ENCODE measurements at regions of chr3 and their contacts with region 1.

Region 1: DNA sequence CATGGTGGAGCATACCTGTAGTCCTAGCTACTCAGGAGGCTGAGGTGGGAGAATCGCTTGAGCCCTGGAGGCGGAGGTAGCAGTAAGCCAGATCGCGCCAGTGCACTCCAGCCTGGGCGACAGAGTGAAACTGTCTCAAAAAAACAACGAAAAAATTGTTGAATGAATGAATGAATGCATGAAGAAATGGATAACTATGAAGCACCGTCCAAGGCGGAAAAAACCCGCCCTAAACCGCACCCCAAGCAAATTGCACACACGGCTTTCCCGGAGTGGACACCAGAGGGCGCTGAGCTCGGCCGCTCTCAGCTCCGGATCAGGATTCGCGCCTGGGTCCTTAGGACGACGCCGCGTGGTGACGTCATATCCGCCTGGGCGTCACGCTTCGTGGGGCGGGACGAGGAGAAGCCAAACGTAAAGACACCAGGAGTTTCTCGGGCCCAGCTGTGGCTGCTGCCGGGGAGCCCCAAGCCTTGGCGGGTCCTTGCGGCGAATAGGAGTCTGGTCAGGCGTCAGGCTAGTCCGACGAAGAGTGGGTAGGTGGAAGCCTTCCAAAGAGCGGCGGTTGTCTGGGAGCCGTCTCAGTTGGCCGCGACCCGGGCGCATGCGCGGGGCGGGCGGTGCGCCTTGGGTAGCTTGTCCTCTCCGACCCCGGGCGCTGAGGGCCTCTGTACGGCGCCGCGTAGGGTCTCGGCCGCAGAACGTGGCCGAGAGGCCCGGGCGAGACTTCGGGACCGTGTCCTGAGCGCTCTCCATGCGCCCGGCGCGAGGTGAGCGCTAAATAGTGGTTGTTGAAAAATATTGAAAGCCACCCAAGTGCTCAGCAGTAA is at the starts of genes HTD2 and RPP14:
- DNase-seq: peak; percentile 76
- H3K4me3 ChIP-seq: peak within 1 kb of the TSS; percentile 84
- CTCF ChIP-seq: peak; percentile 98

Region 2: GRCh38 chr3:57883071-57883470 is 423.0 kb before region 1 on chr3:
- CTCF ChIA-PET with region 1: no interaction called
- POLR2A ChIA-PET with region 1: no interaction called
- DNase-seq: no peak
- H3K4me3 ChIP-seq: no peak overlapping the region
- CTCF ChIP-seq: no peak

Region 3: DNA sequence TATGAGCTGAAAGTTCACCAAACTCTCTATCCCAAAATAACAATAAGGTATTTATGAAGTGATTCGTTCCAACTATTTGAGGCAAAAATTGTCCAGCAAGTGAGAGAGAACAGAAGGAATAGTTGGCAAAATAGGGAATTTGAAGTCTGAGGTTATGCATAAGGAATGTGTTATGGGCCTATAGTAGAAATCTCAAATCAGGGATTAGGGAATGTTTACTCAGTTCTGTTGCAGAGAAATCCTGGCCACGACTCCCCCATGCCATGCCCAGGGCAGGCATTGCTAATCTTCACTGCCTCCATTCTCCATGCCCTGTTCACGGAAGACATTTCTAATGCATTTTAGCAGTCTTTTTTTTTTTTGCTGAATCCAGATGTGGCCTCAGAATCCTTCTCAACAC is 239.3 kb before region 1 on chr3:
- CTCF ChIA-PET with region 1: no interaction called
- POLR2A ChIA-PET with region 1: no interaction called
- DNase-seq: no peak
- H3K4me3 ChIP-seq: no peak overlapping the region
- CTCF ChIP-seq: no peak

Region 4: DNA sequence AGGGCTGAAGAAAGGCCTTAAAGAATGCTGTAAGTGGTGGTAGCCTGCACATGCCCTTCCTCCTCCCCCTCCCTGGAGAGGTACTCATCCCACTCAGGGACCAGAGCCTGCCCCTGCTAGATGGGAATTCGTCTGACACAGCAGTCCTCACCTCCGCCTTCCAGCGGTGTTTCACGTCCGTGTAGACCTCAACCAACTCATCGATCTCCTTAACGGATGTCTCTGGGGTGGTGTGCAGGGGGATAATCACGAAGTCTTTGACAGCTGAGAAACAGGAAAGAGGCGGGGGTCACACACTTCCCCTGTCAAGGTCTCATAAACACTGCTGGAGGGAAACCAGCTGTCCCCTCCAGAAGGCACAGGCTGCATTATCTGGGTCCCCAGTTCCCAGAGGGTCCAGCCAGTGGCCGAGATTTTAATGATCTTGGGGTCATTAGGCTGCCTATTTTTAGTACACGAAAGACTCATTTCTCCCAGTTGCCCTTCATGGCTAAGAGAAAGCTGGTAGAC is 105.2 kb before region 1 on chr3:
- CTCF ChIA-PET with region 1: interaction called, 25 read pairs
- POLR2A ChIA-PET with region 1: no interaction called
- DNase-seq: no peak
- H3K4me3 ChIP-seq: no peak overlapping the region
- CTCF ChIP-seq: no peak

Region 5: DNA sequence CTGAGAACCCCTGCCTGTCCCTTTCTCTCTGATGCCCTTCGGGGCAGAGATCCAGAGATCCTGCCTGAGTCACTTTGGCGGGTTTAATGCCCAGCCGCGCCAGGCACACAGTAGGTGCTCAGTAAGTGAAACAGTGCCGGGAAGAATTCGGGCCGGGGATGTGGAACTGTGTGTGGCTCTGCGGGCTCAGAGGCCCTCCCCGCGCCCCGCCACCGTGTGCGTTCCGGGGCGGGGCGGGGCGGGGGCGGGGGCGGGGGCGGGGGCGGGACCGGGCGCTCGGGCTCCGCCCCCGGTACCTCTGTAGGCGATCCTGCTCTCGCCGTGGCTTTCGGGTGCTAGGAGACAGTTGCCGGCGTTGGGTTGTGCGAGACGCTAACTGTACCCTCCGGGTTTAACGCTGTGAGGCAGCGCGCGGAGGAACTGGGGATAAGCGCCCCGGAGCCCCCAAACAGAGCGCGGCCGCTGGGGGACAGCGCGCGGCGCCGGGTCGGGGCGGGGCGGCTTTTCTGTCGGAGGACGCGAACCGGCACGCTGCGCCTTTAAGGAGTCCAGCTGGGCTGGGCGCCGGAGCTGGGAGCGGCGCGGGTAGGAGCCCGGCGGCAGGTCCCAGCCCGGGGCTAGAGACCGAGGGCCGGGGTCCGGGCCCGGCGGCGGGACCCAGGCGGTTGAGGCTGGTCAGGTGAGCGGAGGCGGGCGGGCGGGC is 68.7 kb before region 1 on chr3 and contains the start of gene ABHD6:
- CTCF ChIA-PET with region 1: interaction called, 35 read pairs
- POLR2A ChIA-PET with region 1: no interaction called
- DNase-seq: no peak
- H3K4me3 ChIP-seq: peak within 1 kb of the TSS; percentile 81
- CTCF ChIP-seq: peak; percentile 33

Region 6: DNA sequence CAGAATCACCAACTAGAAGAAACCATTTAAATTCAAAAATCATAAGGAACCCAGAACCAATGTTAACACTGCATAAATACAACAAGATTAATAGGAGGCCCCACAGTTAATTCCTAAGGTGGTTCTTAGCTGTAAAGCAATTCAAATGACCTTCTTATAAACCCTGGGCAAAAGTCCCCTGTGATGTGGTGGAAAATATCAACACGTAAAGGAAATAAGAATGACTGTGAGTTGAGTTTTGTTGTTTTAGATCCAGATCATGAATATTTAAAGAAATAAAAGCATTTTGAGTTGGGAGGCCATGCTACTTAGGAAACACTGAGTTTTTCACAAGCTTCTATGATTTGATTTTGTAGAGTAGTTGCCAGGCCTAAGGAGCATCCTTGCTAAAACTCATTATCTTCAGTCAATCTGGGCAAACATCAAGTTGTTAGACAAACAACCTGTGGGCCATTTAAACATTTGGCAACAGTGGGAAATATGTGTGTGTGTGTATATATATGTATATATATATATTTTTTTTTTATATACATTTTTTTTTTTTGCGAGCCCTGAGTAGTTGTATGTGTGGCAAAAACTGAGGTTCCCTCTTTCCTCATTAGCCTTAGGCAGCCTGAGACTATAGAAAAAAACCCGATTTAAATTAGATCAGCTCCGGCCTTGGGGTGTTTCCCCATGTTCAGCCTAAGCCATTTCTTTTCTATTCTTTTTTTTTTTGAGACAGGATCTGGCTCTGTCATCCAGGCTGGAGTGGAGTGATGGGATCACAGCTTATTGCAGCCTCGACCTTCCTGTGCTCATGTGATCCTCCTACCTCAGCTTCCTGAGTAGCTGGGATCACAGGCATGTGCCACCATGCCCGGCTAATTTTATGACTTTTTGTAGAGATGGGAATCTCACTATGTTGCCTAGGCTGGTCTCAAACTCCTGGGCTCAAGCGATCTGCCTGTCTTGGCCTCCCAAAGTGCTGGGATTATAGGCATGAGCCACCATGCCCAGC is 18.6 kb after region 1 on chr3:
- CTCF ChIA-PET with region 1: interaction called, 156 read pairs
- POLR2A ChIA-PET with region 1: no interaction called
- DNase-seq: no peak
- H3K4me3 ChIP-seq: no peak overlapping the region
- CTCF ChIP-seq: no peak

Region 7: GRCh38 chr3:58414538-58415197 is 108.6 kb after region 1 on chr3:
- CTCF ChIA-PET with region 1: interaction called, 87 read pairs
- POLR2A ChIA-PET with region 1: no interaction called
- DNase-seq: no peak
- H3K4me3 ChIP-seq: no peak overlapping the region
- CTCF ChIP-seq: peak; percentile 65

Region 8: DNA sequence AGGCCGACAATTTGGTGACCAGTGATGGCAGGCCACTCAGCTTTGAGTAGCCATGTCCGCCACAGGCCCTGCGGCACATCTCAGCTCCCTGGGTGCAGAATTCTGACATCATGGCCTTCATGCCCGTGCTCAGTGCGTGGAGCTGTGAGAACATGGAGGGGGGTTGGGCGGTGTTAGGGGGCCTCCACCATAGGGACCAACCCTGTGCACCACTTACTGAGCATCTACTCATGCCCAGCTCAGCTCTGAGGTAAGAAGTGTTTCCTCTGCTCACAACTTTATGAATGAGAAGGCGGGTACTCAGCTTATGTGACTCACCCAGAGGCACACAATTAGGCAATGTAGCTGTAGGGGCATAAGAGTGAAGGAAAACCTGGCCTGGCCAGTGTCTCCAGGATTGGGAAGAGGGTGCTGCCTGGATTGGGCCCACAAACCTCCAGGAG is 220.4 kb after region 1 on chr3:
- CTCF ChIA-PET with region 1: interaction called, 79 read pairs
- POLR2A ChIA-PET with region 1: no interaction called
- DNase-seq: peak; percentile 64
- H3K4me3 ChIP-seq: no peak overlapping the region
- CTCF ChIP-seq: no peak